Caco-2 (cell line): ENCODE measurements at regions of chrX and their contacts with region 1.

Region 1: DNA sequence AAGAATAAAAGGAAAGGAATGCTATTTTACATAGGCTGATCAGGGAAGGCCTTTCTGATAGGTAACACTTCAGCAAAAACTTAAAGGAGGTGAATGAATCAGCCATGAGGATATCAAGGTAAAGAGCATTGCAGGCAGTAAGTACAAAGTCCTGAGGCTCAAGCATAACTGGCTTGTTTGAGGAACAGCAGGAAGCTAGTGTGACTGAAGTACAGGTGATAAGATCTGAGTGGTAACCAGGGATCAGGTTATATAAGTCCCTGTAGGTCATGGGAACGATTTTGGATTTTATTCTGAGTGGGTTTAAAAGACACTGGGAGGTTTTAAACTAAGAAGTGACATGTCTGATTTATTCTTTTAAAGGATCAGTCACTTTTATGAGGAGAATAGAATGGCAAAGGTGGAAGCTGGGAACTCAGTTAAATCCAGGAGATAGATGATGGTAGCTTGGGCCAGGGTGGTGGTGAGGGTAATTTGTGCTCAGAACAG is 47.1 kb upstream of the THOC2 start:
- DNase-seq: peak; percentile 65 to 71
- H3K4me3 ChIP-seq: no peak overlapping the region
- H3K4me3 Mint-ChIP-seq: peak overlapping the region; percentile 58
- H3K27ac Mint-ChIP-seq: peak overlapping the region; percentile 96
- H3K4me1 ChIP-seq: peaks cover 32% of the 10 kb centered on the region
- H3K4me1 Mint-ChIP-seq: peaks cover 13% of the 10 kb centered on the region
- H3K27me3 ChIP-seq: no peaks in the 10 kb centered on the region
- H3K27me3 Mint-ChIP-seq: no peaks in the 10 kb centered on the region
- CTCF ChIP-seq: no peak

Region 2: DNA sequence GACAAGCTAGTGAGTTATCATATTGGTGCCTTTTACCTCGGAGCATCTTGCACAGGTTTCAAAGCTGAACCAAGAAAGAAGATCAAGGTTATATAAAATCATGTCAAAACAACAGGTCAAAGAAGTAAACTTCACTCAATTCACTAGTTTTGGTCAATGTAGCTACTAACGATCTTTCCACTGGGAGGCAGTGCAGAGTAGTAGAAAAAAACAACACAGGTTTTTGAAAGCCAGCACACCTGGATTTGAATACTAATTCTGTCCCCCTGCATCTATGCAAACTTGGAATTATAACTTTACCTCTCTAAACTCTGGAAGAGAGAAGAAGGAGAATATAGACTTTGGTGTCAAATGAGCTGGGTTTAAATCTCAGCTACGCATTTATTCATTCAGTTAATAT is 329.7 kb before region 1 on chrX:
- CTCF ChIA-PET with region 1: no interaction called
- POLR2A ChIA-PET with region 1: no interaction called
- intact Hi-C with region 1: no loop called
- DNase-seq: peak in 1 of 2 experiments; percentile 1
- H3K4me3 ChIP-seq: no peak overlapping the region
- H3K4me3 Mint-ChIP-seq: no peak overlapping the region
- H3K27ac Mint-ChIP-seq: no peak overlapping the region
- H3K4me1 ChIP-seq: no peaks in the 10 kb centered on the region
- H3K4me1 Mint-ChIP-seq: no peaks in the 10 kb centered on the region
- H3K27me3 ChIP-seq: no peaks in the 10 kb centered on the region
- H3K27me3 Mint-ChIP-seq: no peaks in the 10 kb centered on the region
- CTCF ChIP-seq: peak; percentile 36 to 46

Region 3: DNA sequence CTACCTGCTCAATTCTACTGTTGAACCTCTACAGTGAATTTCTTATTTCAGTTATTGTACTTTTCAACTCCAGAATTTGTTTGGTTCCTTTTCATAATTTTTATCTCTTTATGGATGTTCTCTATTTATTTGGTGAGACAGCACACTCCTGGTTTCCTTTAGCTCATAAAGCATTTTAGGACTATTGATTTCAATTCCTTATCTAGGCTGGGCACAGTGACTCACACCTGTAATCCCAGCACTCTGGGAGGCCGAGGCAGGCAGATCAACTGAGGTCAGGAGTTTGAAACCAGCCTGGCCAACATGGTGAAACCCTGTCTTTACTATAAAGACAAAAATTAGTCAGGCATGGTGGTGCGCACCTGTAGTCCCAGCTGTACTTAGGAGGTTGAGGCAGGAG is 104.8 kb before region 1 on chrX:
- CTCF ChIA-PET with region 1: no interaction called
- POLR2A ChIA-PET with region 1: no interaction called
- intact Hi-C with region 1: no loop called
- DNase-seq: no peak
- H3K4me3 ChIP-seq: no peak overlapping the region
- H3K4me3 Mint-ChIP-seq: no peak overlapping the region
- H3K27ac Mint-ChIP-seq: no peak overlapping the region
- H3K4me1 ChIP-seq: no peaks in the 10 kb centered on the region
- H3K4me1 Mint-ChIP-seq: no peaks in the 10 kb centered on the region
- H3K27me3 ChIP-seq: no peaks in the 10 kb centered on the region
- H3K27me3 Mint-ChIP-seq: no peaks in the 10 kb centered on the region
- CTCF ChIP-seq: no peak

Region 4: DNA sequence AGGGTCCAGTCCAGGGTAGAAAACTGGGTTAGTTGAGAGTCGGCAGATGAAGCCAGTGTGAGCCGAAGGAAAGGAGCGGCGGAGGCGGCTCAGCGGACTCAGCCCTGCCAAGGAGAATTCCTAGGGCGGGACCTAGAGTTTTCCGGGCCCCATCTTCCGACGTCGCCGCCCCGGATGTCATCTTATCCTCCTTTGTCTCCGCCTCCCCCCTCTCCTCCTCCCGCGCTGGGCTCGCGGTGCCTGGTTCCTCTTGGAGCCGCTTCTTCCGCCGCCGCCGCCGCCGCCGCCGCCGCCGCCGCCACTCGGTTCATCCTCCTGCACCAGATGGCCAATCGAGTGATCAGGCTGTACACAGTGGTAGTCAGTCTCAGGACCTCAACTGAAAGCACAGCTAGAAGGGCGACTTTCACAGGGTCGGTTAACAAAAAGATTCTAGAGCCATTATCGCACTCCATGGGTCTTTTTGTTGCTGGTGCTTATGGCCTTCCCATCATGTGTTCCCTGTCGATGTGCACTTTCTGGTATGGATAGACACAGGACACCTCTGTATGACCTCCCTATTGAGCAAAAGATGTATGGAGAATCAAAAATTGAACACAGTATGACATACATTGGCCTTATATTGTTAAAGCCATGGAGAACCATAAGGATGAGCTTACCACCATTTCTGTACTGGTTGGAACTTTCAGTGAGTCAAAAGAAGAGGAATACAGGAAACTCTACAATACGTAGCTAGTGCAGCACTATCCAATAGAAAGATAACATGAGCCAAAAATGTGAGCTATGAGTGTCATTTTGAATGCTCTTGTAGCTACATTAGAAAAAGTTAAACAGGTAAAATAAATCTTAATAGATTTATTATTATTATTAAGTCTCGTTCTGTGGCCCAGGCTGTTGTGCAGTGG is 14.7 kb before region 1 on chrX:
- CTCF ChIA-PET with region 1: interaction called, 3 read pairs
- POLR2A ChIA-PET with region 1: interaction called, 3 read pairs
- intact Hi-C with region 1: loop called (anchors 1 kb)
- DNase-seq: peak; percentile 85 to 90
- H3K4me3 ChIP-seq: peak overlapping the region; percentile 40
- H3K4me3 Mint-ChIP-seq: peak overlapping the region; percentile 74
- H3K27ac Mint-ChIP-seq: peak overlapping the region; percentile 71
- H3K4me1 ChIP-seq: 0 out of 2 replicates have a peak, but pooled peaks cover 4% of the 10 kb centered on the region
- H3K4me1 Mint-ChIP-seq: peaks cover 4% of the 10 kb centered on the region
- H3K27me3 ChIP-seq: no peaks in the 10 kb centered on the region
- H3K27me3 Mint-ChIP-seq: no peaks in the 10 kb centered on the region
- CTCF ChIP-seq: no peak

Region 5: GRCh38 chrX:123803331-123803983 is 23.5 kb after region 1 on chrX:
- CTCF ChIA-PET with region 1: interaction called, 11 read pairs
- POLR2A ChIA-PET with region 1: interaction called, 5 read pairs
- intact Hi-C with region 1: loop called (anchors 1 kb)
- DNase-seq: peak; percentile 80 to 82
- H3K4me3 ChIP-seq: no peak overlapping the region
- H3K4me3 Mint-ChIP-seq: peak overlapping the region; percentile 50
- H3K27ac Mint-ChIP-seq: peak overlapping the region; percentile 91
- H3K4me1 ChIP-seq: peaks cover 7% of the 10 kb centered on the region
- H3K4me1 Mint-ChIP-seq: peaks cover 10% of the 10 kb centered on the region
- H3K27me3 ChIP-seq: no peaks in the 10 kb centered on the region
- H3K27me3 Mint-ChIP-seq: no peaks in the 10 kb centered on the region
- CTCF ChIP-seq: no peak

Region 6: GRCh38 chrX:123822965-123823364 is 43.0 kb after region 1 on chrX:
- CTCF ChIA-PET with region 1: interaction called, 6 read pairs
- POLR2A ChIA-PET with region 1: interaction called, 4 read pairs
- intact Hi-C with region 1: loop called (anchors 2 kb)
- DNase-seq: no peak
- H3K4me3 ChIP-seq: no peak overlapping the region
- H3K4me3 Mint-ChIP-seq: no peak overlapping the region
- H3K27ac Mint-ChIP-seq: no peak overlapping the region
- H3K4me1 ChIP-seq: peaks cover 17% of the 10 kb centered on the region; the same call in 1 of the 2 replicates
- H3K4me1 Mint-ChIP-seq: peaks cover 12% of the 10 kb centered on the region
- H3K27me3 ChIP-seq: no peaks in the 10 kb centered on the region
- H3K27me3 Mint-ChIP-seq: no peaks in the 10 kb centered on the region
- CTCF ChIP-seq: no peak

Region 7: GRCh38 chrX:123859846-123860838 is 80.2 kb after region 1 on chrX and contains the start of gene XIAP:
- CTCF ChIA-PET with region 1: no interaction called
- POLR2A ChIA-PET with region 1: no interaction called
- intact Hi-C with region 1: loop called (anchors 1 kb)
- DNase-seq: peak; percentile 91 to 93
- H3K4me3 ChIP-seq: peak within 1 kb of the TSS; percentile 67
- H3K4me3 Mint-ChIP-seq: peak within 1 kb of the TSS; percentile 71
- H3K27ac Mint-ChIP-seq: peak within 1 kb of the TSS; percentile 50
- H3K4me1 ChIP-seq: 0 out of 2 replicates have a peak, but pooled peaks cover 3% of the 10 kb centered on the region
- H3K4me1 Mint-ChIP-seq: peaks cover 14% of the 10 kb centered on the region
- H3K27me3 ChIP-seq: no peaks in the 10 kb centered on the region
- H3K27me3 Mint-ChIP-seq: no peaks in the 10 kb centered on the region
- CTCF ChIP-seq: no peak
- total RNA-seq, gene XIAP: 21.3 and 25.9 TPM in 2 replicates

Region 8: DNA sequence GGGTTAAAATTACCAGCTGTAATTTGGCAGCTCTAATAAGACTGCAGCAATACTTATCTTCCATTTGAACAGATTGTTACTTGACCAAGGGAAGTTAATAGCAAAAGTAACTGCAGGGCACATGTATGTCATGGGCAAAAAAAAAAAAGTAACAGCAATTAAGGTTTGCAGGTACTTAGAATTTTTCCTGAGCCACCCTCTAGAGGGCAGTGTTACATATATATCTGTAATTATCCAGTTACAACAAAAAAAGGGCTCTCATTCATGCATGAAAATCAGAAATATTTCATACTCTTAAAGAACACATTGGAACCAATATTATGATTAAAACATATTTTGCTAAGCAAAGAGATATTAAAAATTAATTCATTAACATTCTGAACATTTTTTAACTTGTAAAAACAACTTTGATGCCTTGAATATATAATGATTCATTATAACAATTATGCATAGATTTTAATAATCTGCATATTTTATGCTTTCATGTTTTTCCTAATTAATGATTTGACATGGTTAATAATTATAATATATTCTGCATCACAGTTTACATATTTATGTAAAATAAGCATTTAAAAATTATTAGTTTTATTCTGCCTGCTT is 105.0 kb after region 1 on chrX:
- CTCF ChIA-PET with region 1: no interaction called
- POLR2A ChIA-PET with region 1: no interaction called
- intact Hi-C with region 1: loop called (anchors 10 kb)
- DNase-seq: peak in 1 of 2 experiments; percentile 60
- H3K4me3 ChIP-seq: no peak overlapping the region
- H3K4me3 Mint-ChIP-seq: no peak overlapping the region
- H3K27ac Mint-ChIP-seq: no peak overlapping the region
- H3K4me1 ChIP-seq: no peaks in the 10 kb centered on the region
- H3K4me1 Mint-ChIP-seq: peaks cover 11% of the 10 kb centered on the region
- H3K27me3 ChIP-seq: no peaks in the 10 kb centered on the region
- H3K27me3 Mint-ChIP-seq: no peaks in the 10 kb centered on the region
- CTCF ChIP-seq: peak; percentile 35 to 44